Dendritic cell treated with granulocyte-macrophage colony-stimulating factor and Interleukin-4, amounts not matched to agents 40 ng/mL and 50 ng/mL, for 4 days (primary cell): ENCODE measurements at regions of chr15 and their contacts with region 1.

Region 1: DNA sequence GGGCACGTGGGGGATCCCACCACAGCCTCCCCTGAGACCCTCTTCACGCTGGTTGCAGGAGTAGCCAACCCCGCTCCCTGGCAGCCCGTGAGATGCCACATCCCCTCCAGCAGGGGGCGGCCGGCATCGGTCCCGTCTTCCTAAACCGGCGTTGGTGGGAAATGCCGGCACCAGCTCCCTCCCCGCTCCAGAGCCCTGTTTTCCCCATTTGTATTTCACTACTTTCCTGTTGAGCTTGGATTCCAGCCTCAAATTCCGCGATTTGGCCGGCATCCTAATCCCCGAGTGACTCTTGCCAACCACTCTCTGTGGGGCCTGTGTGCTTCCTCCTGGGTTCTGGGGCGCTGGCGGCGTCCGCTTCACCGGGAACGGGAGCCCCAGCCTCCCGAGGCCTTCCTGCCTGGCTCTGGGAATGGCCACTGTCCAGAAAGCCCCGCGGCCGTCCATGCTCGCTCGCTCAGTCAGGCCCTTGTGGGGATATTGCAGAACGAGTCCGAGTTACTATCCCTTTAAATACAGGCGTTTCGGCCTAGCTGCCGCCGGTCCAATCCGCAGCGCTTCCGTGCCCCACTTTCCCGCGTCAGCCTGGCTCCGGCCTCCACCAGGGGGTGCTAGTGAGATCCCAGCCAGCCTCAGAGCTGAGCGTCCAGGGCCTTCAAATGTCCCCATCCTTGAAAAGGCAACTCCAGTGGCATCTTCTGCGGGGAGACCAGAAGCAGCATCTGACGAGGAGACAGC is 8.1 kb upstream of the ADAMTS17 start:
- H3K4me3 Mint-ChIP-seq: peak overlapping the region; percentile 88
- H3K27ac Mint-ChIP-seq: peak overlapping the region; percentile 91
- H3K4me1 Mint-ChIP-seq: peaks cover 26% of the 10 kb centered on the region
- H3K27me3 Mint-ChIP-seq: peaks cover 16% of the 10 kb centered on the region

Region 2: GRCh38 chr15:100383302-100384107 is 33.6 kb after region 1 on chr15:
- intact Hi-C with region 1: loop called (anchors 2 kb)
- H3K4me3 Mint-ChIP-seq: no peak overlapping the region
- H3K27ac Mint-ChIP-seq: no peak overlapping the region
- H3K4me1 Mint-ChIP-seq: peaks cover 19% of the 10 kb centered on the region
- H3K27me3 Mint-ChIP-seq: peaks cover 20% of the 10 kb centered on the region

Region 3: DNA sequence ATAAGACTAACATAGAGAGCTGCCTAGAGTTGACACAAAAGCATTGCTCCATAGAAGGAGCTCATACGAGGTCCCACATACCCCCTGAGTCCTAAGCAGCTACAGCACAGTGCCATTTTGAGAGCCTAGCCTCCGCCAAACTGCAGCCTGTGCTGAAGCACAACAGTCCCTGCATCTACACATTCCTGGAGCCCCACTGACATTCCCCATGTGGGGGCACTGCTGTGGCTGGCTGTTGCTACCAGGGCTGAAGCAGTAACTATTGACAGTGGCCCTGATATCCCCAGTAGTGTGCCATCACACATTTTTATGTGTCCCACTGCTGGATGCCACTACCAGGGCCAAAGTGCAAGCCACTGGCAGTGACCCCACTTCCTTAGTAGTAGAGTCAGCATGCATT is 98.6 kb after region 1 on chr15:
- intact Hi-C with region 1: no loop called
- H3K4me3 Mint-ChIP-seq: no peak overlapping the region
- H3K27ac Mint-ChIP-seq: no peak overlapping the region
- H3K4me1 Mint-ChIP-seq: no peaks in the 10 kb centered on the region
- H3K27me3 Mint-ChIP-seq: peaks cover 8% of the 10 kb centered on the region

Region 4: GRCh38 chr15:100572362-100572983 is 222.6 kb after region 1 on chr15:
- intact Hi-C with region 1: loop called (anchors 1 kb)
- H3K4me3 Mint-ChIP-seq: no peak overlapping the region
- H3K27ac Mint-ChIP-seq: no peak overlapping the region
- H3K4me1 Mint-ChIP-seq: no peaks in the 10 kb centered on the region
- H3K27me3 Mint-ChIP-seq: no peaks in the 10 kb centered on the region

Region 5: DNA sequence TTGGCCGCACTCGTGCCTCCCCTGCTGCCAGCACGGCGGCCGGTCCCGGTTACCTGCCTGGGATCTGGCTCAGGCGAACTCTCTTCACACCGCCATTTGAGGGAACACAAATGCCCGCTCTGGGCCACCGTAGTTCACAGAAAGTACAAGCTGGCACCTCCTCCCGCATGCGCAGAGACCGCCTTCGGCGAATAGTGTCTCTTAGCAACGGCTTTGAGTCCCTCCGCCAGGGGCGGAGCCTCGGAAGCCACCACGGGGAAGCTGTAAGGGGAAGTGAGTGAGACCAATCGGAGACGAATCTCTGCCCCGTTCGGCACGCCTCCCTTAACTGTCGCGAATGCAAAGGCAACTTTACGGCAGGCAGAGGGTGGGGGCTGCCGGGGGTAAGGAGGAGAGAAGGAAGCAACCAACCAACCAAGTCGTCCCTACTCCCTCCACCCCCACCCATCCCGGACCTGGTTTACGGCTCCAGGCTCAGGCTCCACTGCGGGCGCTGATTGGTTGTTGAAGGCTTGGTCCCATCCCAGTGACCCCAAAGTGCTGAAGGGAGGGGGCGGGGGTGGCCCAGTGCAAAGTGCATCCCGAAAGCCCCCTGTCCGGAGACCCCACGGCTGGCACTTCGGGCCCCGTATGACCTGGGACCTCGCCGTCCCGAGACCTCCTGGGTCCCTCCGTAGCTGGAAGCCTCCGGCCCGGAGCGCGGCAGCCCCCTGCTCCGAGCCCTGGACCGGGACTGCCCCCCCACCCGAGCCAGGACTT is 252.4 kb after region 1 on chr15 and contains the starts of genes ASB7 and LINS1:
- intact Hi-C with region 1: loop called (anchors 1 kb)
- H3K4me3 Mint-ChIP-seq: no peak within 1 kb of the TSS
- H3K27ac Mint-ChIP-seq: no peak within 1 kb of the TSS
- H3K4me1 Mint-ChIP-seq: peaks cover 32% of the 10 kb centered on the region
- H3K27me3 Mint-ChIP-seq: no peaks in the 10 kb centered on the region